ENCODE measurements at regions of chr17 and their contacts with region 1.

Region 1: DNA sequence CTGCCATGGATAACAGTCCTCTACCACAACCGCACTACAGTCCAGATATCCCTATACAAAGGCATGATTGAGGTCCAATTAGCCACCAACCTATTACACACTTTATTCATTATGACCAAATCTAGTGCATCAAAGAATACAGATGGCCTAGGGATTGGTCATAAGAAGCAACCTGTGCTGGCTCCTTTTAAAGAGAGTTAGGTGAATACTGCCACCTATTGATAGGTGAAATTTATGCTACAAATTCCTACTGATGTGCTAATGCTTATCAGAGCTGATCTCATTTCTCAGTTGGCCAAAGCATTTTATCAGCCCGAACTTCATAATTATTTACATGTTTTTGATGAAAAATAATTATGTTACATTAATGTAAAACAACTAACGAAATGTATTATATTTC is 166.2 kb downstream of the ANKFN1 start:
- DNase-seq: no peak
- H3K4me3 ChIP-seq: no peak overlapping the region
- H3K27ac ChIP-seq: no peak overlapping the region
- H3K4me1 ChIP-seq: peaks cover 0 to 6% (median 2%) of the 10 kb centered on the region in 4 experiments; a peak in 3 of 7 replicates
- H3K27me3 ChIP-seq: peaks cover 0 to 1% (median 0%) of the 10 kb centered on the region in 4 experiments; a peak in 1 of 7 replicates
- CTCF ChIP-seq: peak in 2 of 3 experiments; percentile 42 to 59; a peak in 2 of 4 replicates
- EP300 ChIP-seq: no peak
- POLR2A ChIP-seq: no peak
- RAD21 ChIP-seq: peak; percentile 79

Region 2: DNA sequence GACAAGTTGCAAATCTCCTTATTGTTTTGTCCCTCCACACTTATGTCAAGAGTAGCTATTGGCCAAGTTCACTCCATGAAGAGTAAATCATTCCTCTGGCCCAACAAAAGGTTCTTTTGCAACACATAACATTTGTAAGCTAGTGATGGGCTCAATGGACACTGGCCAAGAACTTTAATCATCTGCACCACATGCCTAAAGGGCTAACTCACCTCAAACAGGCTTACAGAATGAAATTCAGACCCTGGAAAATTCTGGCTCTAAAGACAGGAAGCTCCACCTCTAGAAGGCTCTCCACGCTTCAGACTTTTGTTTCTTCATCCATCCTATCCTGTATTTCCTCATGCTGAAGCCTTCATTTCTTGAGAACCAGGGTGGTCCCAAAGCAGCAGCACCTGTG is 177.2 kb before region 1 on chr17:
- CTCF ChIA-PET with region 1: interaction called, 12 read pairs
- POLR2A ChIA-PET with region 1: no interaction called
- DNase-seq: no peak
- H3K4me3 ChIP-seq: no peak overlapping the region
- H3K27ac ChIP-seq: no peak overlapping the region
- H3K4me1 ChIP-seq: no peaks in the 10 kb centered on the region
- H3K27me3 ChIP-seq: no peaks in the 10 kb centered on the region
- CTCF ChIP-seq: no peak
- EP300 ChIP-seq: no peak
- POLR2A ChIP-seq: no peak
- RAD21 ChIP-seq: no peak

Region 3: GRCh38 chr17:56305007-56305406 is 14.5 kb before region 1 on chr17:
- CTCF ChIA-PET with region 1: no interaction called
- POLR2A ChIA-PET with region 1: no interaction called
- DNase-seq: no peak
- H3K4me3 ChIP-seq: no peak overlapping the region
- H3K27ac ChIP-seq: no peak overlapping the region
- H3K4me1 ChIP-seq: no peaks in the 10 kb centered on the region
- H3K27me3 ChIP-seq: peaks cover 0 to 1% (median 0%) of the 10 kb centered on the region in 4 experiments; a peak in 1 of 7 replicates
- CTCF ChIP-seq: peak in 1 of 3 experiments; percentile 5; a peak in 1 of 4 replicates
- EP300 ChIP-seq: no peak
- POLR2A ChIP-seq: no peak
- RAD21 ChIP-seq: no peak; a peak in 1 of 4 replicates

Region 4: GRCh38 chr17:56351675-56352074 is 32.2 kb after region 1 on chr17:
- CTCF ChIA-PET with region 1: no interaction called
- POLR2A ChIA-PET with region 1: no interaction called
- DNase-seq: no peak
- H3K4me3 ChIP-seq: no peak overlapping the region
- H3K27ac ChIP-seq: no peak overlapping the region
- H3K4me1 ChIP-seq: no peaks in the 10 kb centered on the region
- H3K27me3 ChIP-seq: no peaks in the 10 kb centered on the region
- CTCF ChIP-seq: no peak
- EP300 ChIP-seq: no peak
- POLR2A ChIP-seq: no peak
- RAD21 ChIP-seq: no peak

Region 5: DNA sequence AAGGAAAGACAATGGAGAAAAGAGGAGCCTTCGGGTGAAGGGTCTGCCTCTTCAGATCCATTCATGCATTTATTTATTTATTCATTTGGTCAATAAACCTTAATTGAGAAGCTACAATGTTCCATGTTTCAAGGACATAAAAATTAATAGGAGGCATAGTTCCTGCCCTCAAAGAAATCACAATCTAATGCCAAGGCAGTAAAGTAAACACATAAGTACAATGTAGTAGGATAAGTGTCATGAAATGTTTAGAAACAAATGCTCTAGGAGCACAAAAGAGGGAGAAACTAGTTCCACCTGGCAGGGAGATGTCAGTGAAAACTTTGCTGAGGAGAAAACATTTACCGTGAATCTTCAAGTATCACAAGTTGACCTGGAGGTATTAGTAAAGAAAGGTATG is 170.5 kb after region 1 on chr17:
- CTCF ChIA-PET with region 1: no interaction called
- POLR2A ChIA-PET with region 1: no interaction called
- DNase-seq: no peak
- H3K4me3 ChIP-seq: no peak overlapping the region
- H3K27ac ChIP-seq: no peak overlapping the region
- H3K4me1 ChIP-seq: no peaks in the 10 kb centered on the region
- H3K27me3 ChIP-seq: peaks cover 0 to 1% (median 0%) of the 10 kb centered on the region in 4 experiments; a peak in 1 of 7 replicates
- CTCF ChIP-seq: no peak
- EP300 ChIP-seq: no peak
- POLR2A ChIP-seq: no peak
- RAD21 ChIP-seq: no peak

Region 6: GRCh38 chr17:56521104-56521777 is 201.7 kb after region 1 on chr17:
- CTCF ChIA-PET with region 1: no interaction called
- POLR2A ChIA-PET with region 1: no interaction called
- DNase-seq: peak in 1 of 2 experiments; percentile 49
- H3K4me3 ChIP-seq: no peak overlapping the region
- H3K27ac ChIP-seq: no peak overlapping the region
- H3K4me1 ChIP-seq: peaks cover 0 to 2% (median 0%) of the 10 kb centered on the region in 4 experiments; a peak in 2 of 7 replicates
- H3K27me3 ChIP-seq: no peaks in the 10 kb centered on the region
- CTCF ChIP-seq: no peak
- EP300 ChIP-seq: no peak
- POLR2A ChIP-seq: no peak
- RAD21 ChIP-seq: no peak

Measured in H1 (cell line).